ENCODE measurements at regions of chr10 and their contacts with region 1.

Region 1: GRCh38 chr10:48209246-48209645 is 65.2 kb downstream of the FRMPD2 start:
- DNase-seq: no peak
- ATAC-seq: no peak
- H3K4me3 ChIP-seq: no peak overlapping the region
- H3K4me3 Mint-ChIP-seq: no peak overlapping the region
- H3K27ac ChIP-seq: no peak overlapping the region
- H3K27ac Mint-ChIP-seq: no peak overlapping the region
- H3K4me1 ChIP-seq: no peaks in the 10 kb centered on the region
- H3K4me1 Mint-ChIP-seq: no peaks in the 10 kb centered on the region
- H3K27me3 ChIP-seq: no peaks in the 10 kb centered on the region
- H3K27me3 Mint-ChIP-seq: no peaks in the 10 kb centered on the region
- CTCF ChIP-seq: no peak

Region 2: GRCh38 chr10:48221814-48222213 is 12.6 kb after region 1 on chr10:
- CTCF ChIA-PET with region 1: interaction called, 3 read pairs
- POLR2A ChIA-PET with region 1: no interaction called
- intact Hi-C with region 1: loop called in 1 of 2 experiments (anchors 2 kb)
- DNase-seq: no peak
- ATAC-seq: no peak
- H3K4me3 ChIP-seq: no peak overlapping the region
- H3K4me3 Mint-ChIP-seq: no peak overlapping the region
- H3K27ac ChIP-seq: no peak overlapping the region
- H3K27ac Mint-ChIP-seq: no peak overlapping the region
- H3K4me1 ChIP-seq: no peaks in the 10 kb centered on the region
- H3K4me1 Mint-ChIP-seq: no peaks in the 10 kb centered on the region
- H3K27me3 ChIP-seq: peaks cover 0 to 2% of the 10 kb centered on the region in 2 experiments
- H3K27me3 Mint-ChIP-seq: peaks cover 24% of the 10 kb centered on the region
- CTCF ChIP-seq: no peak

Region 3: DNA sequence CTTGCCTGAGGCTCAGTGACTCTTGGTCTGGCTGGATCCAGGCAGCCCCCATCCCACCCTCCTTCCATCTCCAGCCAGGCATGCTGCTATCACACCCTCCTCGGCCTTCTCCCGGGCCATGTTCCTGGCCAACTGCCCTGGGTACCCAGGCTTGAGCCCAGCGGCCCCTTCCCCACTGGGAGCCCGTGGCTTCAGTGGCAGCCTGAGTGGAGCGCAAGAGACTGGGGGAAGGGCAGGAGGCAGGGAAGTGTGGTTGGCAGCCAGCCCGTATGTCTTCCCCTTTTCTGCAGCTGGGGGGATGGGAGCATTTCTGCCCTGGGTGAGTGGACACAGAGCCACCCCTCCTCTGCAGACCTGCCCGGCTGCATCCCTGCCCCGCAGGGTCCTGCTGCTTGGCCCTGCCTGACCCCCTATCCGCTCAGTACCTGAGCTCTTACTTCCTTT is 247.1 kb after region 1 on chr10:
- CTCF ChIA-PET with region 1: no interaction called
- POLR2A ChIA-PET with region 1: no interaction called
- intact Hi-C with region 1: no loop called
- DNase-seq: peak in 3 of 14 experiments; percentile 6 to 39 (median 35)
- ATAC-seq: no peak
- H3K4me3 ChIP-seq: no peak overlapping the region
- H3K4me3 Mint-ChIP-seq: no peak overlapping the region
- H3K27ac ChIP-seq: no peak overlapping the region
- H3K27ac Mint-ChIP-seq: no peak overlapping the region
- H3K4me1 ChIP-seq: peaks cover 6% of the 10 kb centered on the region
- H3K4me1 Mint-ChIP-seq: no peaks in the 10 kb centered on the region
- H3K27me3 ChIP-seq: peaks cover 2 to 4% of the 10 kb centered on the region in 2 experiments
- H3K27me3 Mint-ChIP-seq: no peaks in the 10 kb centered on the region
- CTCF ChIP-seq: no peak

Measured in CD4-positive, alpha-beta T cell (primary cell).